Caco-2 (cell line): ENCODE measurements at regions of chr2 and their contacts with region 1.

Region 1: DNA sequence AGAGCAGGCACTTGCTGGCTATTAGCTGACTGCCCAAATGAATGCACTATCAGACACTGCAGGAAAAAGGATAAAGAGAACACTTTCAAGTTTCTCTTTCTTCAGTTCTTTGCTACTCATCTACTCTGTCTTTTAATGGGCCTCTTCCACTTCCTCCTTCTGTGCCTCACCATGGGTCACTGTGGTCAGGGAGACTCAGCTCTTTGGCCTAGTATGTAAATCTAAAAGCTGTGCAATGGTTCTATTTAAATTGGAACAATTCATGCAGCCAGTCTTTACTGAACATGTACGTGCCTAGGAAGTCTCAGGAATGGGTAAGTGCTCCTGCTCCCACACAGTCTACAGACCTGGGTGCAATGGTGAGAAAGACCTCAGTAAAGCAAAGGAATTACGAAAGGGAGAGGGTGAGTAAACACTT is 79.1 kb upstream of the DNMT3A start:
- DNase-seq: no peak
- H3K4me3 ChIP-seq: no peak overlapping the region
- H3K4me3 Mint-ChIP-seq: no peak overlapping the region
- H3K27ac Mint-ChIP-seq: no peak overlapping the region
- H3K4me1 ChIP-seq: peaks cover 10% of the 10 kb centered on the region; the same call in 1 of the 2 replicates
- H3K4me1 Mint-ChIP-seq: peaks cover 7% of the 10 kb centered on the region
- H3K27me3 ChIP-seq: no peaks in the 10 kb centered on the region
- H3K27me3 Mint-ChIP-seq: no peaks in the 10 kb centered on the region
- CTCF ChIP-seq: no peak

Region 2: DNA sequence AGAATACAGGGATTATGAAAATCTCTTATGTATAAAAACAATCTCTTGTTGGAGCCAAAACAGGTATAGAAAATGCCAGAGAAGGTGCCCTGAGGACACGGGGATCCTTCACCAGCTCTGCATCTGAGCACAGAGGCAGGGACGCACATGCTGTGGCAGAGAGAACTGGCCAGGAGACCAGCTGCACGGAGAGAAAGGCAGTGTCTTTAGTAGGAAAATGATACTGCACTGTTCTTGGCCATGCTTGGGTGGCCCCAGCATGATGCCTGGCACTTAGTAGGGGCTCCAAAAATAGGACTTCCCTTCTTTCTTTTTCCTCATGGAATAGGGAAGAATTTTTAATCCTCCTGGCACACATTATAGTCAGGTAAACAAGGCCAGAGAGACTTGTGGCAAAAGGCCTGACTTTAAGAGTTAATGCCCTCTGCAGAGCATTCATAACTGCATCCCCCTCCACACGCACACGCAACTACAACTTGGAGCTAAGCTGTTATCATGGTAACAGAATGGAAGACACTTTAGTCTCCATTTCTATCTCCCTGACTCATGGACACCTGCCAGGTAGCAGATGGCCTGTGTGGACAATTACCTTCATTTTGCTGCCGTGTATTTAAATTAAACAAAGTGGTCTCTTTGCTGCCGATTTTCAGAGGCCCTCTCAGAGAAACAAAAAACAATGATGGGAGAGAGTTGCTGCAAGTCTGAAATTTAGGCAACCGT is 19.4 kb before region 1 on chr2:
- CTCF ChIA-PET with region 1: no interaction called
- POLR2A ChIA-PET with region 1: no interaction called
- intact Hi-C with region 1: loop called (anchors 2 kb)
- DNase-seq: no peak
- H3K4me3 ChIP-seq: no peak overlapping the region
- H3K4me3 Mint-ChIP-seq: no peak overlapping the region
- H3K27ac Mint-ChIP-seq: no peak overlapping the region
- H3K4me1 ChIP-seq: no peaks in the 10 kb centered on the region; the same call in 1 of the 2 replicates
- H3K4me1 Mint-ChIP-seq: peaks cover 7% of the 10 kb centered on the region
- H3K27me3 ChIP-seq: no peaks in the 10 kb centered on the region
- H3K27me3 Mint-ChIP-seq: no peaks in the 10 kb centered on the region
- CTCF ChIP-seq: no peak

Region 3: GRCh38 chr2:25453199-25453905 is 32.5 kb after region 1 on chr2:
- CTCF ChIA-PET with region 1: no interaction called
- POLR2A ChIA-PET with region 1: no interaction called
- intact Hi-C with region 1: loop called (anchors 1 kb)
- DNase-seq: no peak
- H3K4me3 ChIP-seq: no peak overlapping the region
- H3K4me3 Mint-ChIP-seq: no peak overlapping the region
- H3K27ac Mint-ChIP-seq: no peak overlapping the region
- H3K4me1 ChIP-seq: peaks cover 23% of the 10 kb centered on the region
- H3K4me1 Mint-ChIP-seq: peaks cover 21% of the 10 kb centered on the region
- H3K27me3 ChIP-seq: no peaks in the 10 kb centered on the region
- H3K27me3 Mint-ChIP-seq: no peaks in the 10 kb centered on the region
- CTCF ChIP-seq: no peak